Posterior cingulate gyrus (tissue), 11 donors: ENCODE measurements at regions of chr17 and their contacts with region 1.

Region 1: DNA sequence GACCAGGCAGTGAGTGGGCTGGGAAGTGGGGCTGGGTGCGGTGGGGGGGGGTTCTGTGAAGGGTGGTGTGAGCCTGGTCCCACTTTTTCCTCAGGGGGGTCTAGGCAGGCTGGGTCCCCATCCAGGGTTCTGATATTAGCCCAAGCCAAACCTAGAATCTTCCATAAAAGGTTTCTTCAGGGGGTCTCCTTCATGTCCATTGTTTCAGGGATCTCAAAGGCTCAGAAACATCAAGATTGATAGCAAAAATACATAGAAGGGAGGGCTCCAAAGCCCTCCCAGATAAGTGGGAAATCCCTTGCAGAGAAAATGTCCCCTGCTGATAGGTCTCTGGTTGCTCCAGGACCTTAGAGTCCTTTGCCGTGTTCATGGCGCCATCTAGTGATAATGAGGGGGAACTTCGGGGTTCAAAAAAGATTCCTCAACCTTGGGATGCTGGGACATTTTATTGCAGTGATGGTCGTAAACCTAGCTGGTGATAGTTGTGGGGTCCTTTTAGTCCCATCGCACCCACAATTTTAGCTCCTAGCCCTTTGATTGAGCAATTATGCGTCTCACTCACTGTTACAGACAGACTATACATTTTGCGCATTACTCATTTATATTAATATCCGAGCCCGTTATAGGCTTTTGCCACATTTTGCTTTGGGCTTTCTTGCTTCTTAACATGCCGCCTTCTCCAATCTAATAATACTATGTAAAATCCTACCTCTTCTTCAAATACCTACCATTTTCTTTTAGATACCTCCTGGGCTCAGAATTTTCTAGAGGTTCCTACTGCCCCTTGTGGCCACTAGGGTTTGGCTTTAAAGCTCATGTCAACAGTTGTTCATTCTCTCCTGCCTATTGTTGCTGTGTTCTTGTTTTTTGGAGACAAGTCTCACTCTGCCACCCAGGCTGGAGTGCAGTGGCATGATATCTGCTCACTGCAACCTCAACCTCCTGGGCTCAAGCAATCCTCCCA is 35.1 kb downstream of the IGF2BP1 start:
- DNase-seq: peak in 3 of 10 donors; percentile 19 to 37 (median 29)

Region 2: DNA sequence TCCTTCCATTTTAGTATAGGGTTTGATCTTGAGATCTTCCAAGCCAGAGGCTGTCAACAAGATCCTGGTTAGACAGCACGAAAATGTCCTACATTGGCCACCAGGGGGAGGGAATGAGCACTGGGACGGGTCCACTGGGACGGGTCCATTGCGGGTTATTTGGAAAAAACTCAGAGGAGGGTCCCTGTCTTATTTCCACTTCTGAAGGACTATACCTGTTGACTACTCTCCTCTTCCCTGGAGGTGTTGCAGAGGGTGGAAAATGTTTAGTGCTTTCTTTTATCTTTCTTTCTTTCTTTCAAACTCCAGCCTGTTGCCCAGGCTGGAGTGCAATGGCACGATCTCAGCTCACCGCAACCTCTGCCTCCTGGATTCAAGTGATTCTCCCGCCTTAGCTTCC is 217.7 kb before region 1 on chr17:
- intact Hi-C with region 1: loop called (anchors 2 kb)
- DNase-seq: peak in 4 of 10 donors; percentile 33 to 47 (median 46)

Region 3: DNA sequence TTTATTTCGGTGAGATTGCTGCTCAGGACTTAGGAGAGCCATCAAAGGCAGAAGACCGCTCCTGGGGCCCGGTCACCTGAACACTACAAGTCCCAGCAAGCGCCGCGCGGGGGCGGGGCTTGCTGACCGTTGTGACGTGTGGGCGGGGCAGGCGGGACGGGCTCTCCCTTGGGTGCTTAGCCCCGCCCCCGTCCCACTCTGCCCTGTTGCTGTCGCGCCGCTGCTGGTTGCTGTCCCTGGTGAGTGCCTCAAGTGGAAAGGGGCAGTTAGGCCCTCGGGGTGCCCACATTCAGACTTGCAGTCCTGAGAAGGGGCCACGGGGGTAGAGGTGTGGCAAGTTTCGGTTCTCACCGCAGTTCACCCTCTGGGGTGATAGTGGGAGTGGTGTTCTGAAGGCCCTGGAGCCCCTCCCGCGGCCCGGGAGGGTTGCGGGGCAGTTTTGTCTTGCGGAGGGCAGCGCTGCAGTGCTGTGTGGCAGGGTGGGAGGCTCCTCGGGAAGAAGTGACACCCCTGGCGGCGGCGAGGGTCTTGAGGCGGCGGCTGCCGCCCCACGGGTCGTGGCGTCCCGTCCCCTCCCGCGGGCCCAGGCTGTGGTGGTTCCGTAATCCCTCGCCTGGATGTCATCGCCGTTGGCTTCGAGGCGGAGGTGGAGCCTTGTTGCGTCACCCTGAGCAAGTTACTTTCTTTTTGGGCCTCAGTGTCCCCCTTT is 201.3 kb before region 1 on chr17 and contains the start of gene CALCOCO2:
- intact Hi-C with region 1: no loop called
- DNase-seq: peak; percentile 86 to 99 (median 95)